CD4-positive, alpha-beta T cell (primary cell): ENCODE measurements at regions of chr1 and their contacts with region 1.

Region 1: GRCh38 chr1:117321680-117322609 is 45.3 kb upstream of the MAN1A2 start:
- DNase-seq: no peak
- ATAC-seq: no peak
- H3K4me3 ChIP-seq: no peak overlapping the region
- H3K4me3 Mint-ChIP-seq: no peak overlapping the region
- H3K27ac ChIP-seq: no peak overlapping the region
- H3K27ac Mint-ChIP-seq: no peak overlapping the region
- H3K4me1 ChIP-seq: no peaks in the 10 kb centered on the region
- H3K4me1 Mint-ChIP-seq: no peaks in the 10 kb centered on the region
- H3K27me3 ChIP-seq: peaks cover 4 to 6% of the 10 kb centered on the region in 2 experiments
- H3K27me3 Mint-ChIP-seq: peaks cover 43% of the 10 kb centered on the region
- CTCF ChIP-seq: no peak

Region 2: GRCh38 chr1:117341561-117341960 is 19.6 kb after region 1 on chr1:
- CTCF ChIA-PET with region 1: no interaction called
- POLR2A ChIA-PET with region 1: no interaction called
- intact Hi-C with region 1: no loop called
- DNase-seq: no peak
- ATAC-seq: no peak
- H3K4me3 ChIP-seq: no peak overlapping the region
- H3K4me3 Mint-ChIP-seq: no peak overlapping the region
- H3K27ac ChIP-seq: no peak overlapping the region
- H3K27ac Mint-ChIP-seq: no peak overlapping the region
- H3K4me1 ChIP-seq: peaks cover 1% of the 10 kb centered on the region
- H3K4me1 Mint-ChIP-seq: peaks cover 30% of the 10 kb centered on the region
- H3K27me3 ChIP-seq: no peaks in the 10 kb centered on the region
- H3K27me3 Mint-ChIP-seq: no peaks in the 10 kb centered on the region
- CTCF ChIP-seq: no peak

Region 3: GRCh38 chr1:117388328-117388727 is 66.4 kb after region 1 on chr1:
- CTCF ChIA-PET with region 1: no interaction called
- POLR2A ChIA-PET with region 1: no interaction called
- intact Hi-C with region 1: no loop called
- DNase-seq: no peak
- ATAC-seq: peak; percentile 29
- H3K4me3 ChIP-seq: no peak overlapping the region
- H3K4me3 Mint-ChIP-seq: peak overlapping the region; percentile 11
- H3K27ac ChIP-seq: no peak overlapping the region
- H3K27ac Mint-ChIP-seq: peak overlapping the region; percentile 62
- H3K4me1 ChIP-seq: peaks cover 14% of the 10 kb centered on the region
- H3K4me1 Mint-ChIP-seq: peaks cover 85% of the 10 kb centered on the region
- H3K27me3 ChIP-seq: no peaks in the 10 kb centered on the region
- H3K27me3 Mint-ChIP-seq: no peaks in the 10 kb centered on the region
- CTCF ChIP-seq: no peak

Region 4: DNA sequence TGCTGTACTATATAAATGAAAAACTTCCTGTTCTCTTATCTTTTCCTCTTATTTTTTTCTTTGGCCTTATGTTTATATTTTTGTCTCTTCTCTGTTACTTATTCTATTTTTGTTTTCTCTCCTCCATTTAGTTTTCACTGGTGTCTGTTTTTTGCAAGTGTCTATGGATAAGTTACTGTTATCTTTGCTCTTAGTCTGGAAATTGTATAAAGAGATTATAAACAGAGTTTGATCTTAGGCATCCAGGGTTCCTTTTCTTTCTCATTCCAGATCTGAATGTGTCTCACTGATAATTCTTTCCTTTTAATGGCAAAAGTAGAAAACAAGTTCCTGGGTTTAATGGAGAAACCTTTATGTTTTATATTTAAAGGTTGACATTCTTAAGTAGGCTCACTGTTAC is 79.8 kb after region 1 on chr1:
- CTCF ChIA-PET with region 1: no interaction called
- POLR2A ChIA-PET with region 1: no interaction called
- intact Hi-C with region 1: loop called in 1 of 2 experiments (anchors 5 kb)
- DNase-seq: no peak
- ATAC-seq: no peak
- H3K4me3 ChIP-seq: no peak overlapping the region
- H3K4me3 Mint-ChIP-seq: no peak overlapping the region
- H3K27ac ChIP-seq: no peak overlapping the region
- H3K27ac Mint-ChIP-seq: no peak overlapping the region
- H3K4me1 ChIP-seq: no peaks in the 10 kb centered on the region
- H3K4me1 Mint-ChIP-seq: peaks cover 48% of the 10 kb centered on the region
- H3K27me3 ChIP-seq: no peaks in the 10 kb centered on the region
- H3K27me3 Mint-ChIP-seq: no peaks in the 10 kb centered on the region
- CTCF ChIP-seq: no peak

Region 5: GRCh38 chr1:118185084-118185832 is 863.3 kb after region 1 on chr1 and contains the start of gene SPAG17:
- CTCF ChIA-PET with region 1: no interaction called
- POLR2A ChIA-PET with region 1: no interaction called
- intact Hi-C with region 1: no loop called
- DNase-seq: peak in 2 of 14 experiments; percentile 0 to 8
- ATAC-seq: no peak
- H3K4me3 ChIP-seq: no peak within 1 kb of the TSS
- H3K4me3 Mint-ChIP-seq: no peak within 1 kb of the TSS
- H3K27ac ChIP-seq: no peak within 1 kb of the TSS
- H3K27ac Mint-ChIP-seq: no peak within 1 kb of the TSS
- H3K4me1 ChIP-seq: peaks cover 5% of the 10 kb centered on the region
- H3K4me1 Mint-ChIP-seq: no peaks in the 10 kb centered on the region
- H3K27me3 ChIP-seq: peaks cover 0 to 5% of the 10 kb centered on the region in 2 experiments
- H3K27me3 Mint-ChIP-seq: peaks cover 9% of the 10 kb centered on the region
- CTCF ChIP-seq: no peak
- total RNA-seq, gene SPAG17: not detected